ENCODE measurements at regions of chr4 and their contacts with region 1.

Region 1: DNA sequence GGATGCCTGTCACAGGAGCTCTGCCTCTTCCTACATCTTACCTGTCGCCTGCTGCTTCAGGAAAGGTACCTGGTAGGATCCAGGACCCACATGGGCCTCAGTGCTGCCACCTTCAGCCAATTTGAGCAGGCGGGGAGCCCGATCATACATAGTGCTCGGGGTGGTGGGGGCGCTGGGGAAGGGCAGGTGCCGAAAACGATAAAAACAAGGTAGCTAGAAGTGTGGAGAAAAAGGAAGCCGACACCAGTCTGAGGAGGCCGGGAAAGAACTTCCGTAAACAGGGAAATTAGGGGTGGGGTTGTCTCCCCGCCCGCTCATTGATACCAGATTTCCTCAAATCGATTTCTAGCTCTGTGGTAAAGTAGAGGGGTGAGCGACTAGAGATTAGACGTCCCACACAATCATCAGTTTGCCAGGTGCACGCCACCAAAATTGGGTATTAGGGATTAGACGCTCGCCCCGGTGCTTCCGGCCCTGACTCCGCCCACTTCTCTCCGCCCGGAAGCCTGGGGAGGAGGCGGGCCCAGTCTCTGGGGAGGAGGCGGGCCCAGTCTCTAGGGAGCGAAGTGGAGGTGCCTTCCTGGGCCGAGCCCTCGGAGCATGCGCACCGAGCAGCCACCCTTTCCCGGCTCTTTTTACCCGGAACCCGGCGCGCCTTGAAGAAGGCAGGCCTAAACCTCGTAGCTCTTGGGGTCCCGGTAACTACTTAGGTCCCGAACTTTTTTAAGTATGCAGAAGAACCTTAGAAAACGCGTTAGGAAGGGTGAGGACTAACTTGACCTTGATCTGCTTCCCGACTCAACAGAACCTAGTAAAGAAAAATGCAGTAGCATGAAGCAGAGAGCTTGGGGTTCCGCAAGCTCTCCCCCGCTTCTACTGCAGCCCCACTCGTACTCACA is at the start of gene STPG2:
- DNase-seq: peak; percentile 84 to 91 (median 90)
- H3K4me3 ChIP-seq: peak within 1 kb of the TSS; percentile 94 to 99 (median 96)
- H3K4me3 Mint-ChIP-seq: peak within 1 kb of the TSS; percentile 94 to 96
- H3K27ac ChIP-seq: peak within 1 kb of the TSS; percentile 71 to 95
- H3K27ac Mint-ChIP-seq: peak within 1 kb of the TSS; percentile 91 to 97 (median 95)
- H3K4me1 ChIP-seq: peaks cover 10 to 13% of the 10 kb centered on the region in 2 donors
- H3K4me1 Mint-ChIP-seq: peaks cover 12% of the 10 kb centered on the region
- H3K27me3 ChIP-seq: peaks cover 0 to 2% of the 10 kb centered on the region in 2 donors
- H3K27me3 Mint-ChIP-seq: peaks cover 0 to 3% (median 2%) of the 10 kb centered on the region in 3 donors
- CTCF ChIP-seq: peak; percentile 65
- polyA plus RNA-seq, gene STPG2: 0.04 TPM in 1 of 3 donors, not detected in the others

Region 2: DNA sequence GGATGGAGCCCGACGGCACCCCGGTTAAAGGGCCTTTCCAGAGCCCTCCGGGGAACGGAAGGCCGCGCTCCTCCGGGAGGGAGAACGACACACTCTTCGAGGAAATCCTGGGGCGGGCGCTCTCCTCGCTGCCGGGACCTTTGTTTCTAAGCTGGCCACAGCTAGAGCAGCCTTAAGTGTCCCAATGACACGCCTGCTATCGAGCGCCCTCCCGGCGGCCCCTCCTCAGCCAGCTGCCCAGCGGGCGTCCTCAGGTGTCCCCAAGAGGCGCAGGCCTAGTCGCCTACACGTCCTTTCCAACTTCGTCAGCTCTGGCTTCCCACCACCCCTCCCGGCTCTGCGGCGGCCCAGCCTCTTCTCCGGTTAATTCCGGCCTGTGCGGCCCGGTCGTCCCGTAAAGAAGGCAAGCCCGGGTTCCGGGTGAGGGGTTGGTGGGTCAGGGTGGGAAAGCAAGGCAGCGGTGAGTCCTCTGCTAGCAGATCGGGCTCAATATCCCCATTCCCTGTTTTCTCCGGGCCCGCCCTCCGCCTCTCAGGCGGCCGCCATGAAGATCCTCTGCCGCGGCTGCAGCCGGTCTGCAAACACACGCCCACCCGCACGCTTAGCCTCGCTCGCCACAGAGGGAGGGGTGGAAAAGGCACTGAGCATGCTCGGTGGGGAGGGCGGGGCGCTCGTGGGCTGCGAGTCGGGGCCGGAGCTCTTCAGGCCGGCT is 117.5 kb after region 1 on chr4:
- intact Hi-C with region 1: loop called in 1 of 2 experiments (anchors 10 kb)
- DNase-seq: peak; percentile 76 to 89 (median 84)
- H3K4me3 ChIP-seq: peak overlapping the region; percentile 79 to 93 (median 84)
- H3K4me3 Mint-ChIP-seq: peak overlapping the region; percentile 89 to 93
- H3K27ac ChIP-seq: peak overlapping the region; percentile 81 to 91
- H3K27ac Mint-ChIP-seq: peak overlapping the region; percentile 85 to 93 (median 89)
- H3K4me1 ChIP-seq: peaks cover 22 to 24% of the 10 kb centered on the region in 2 donors
- H3K4me1 Mint-ChIP-seq: peaks cover 23% of the 10 kb centered on the region
- H3K27me3 ChIP-seq: no peaks in the 10 kb centered on the region
- H3K27me3 Mint-ChIP-seq: no peaks in the 10 kb centered on the region
- CTCF ChIP-seq: no peak

Region 3: DNA sequence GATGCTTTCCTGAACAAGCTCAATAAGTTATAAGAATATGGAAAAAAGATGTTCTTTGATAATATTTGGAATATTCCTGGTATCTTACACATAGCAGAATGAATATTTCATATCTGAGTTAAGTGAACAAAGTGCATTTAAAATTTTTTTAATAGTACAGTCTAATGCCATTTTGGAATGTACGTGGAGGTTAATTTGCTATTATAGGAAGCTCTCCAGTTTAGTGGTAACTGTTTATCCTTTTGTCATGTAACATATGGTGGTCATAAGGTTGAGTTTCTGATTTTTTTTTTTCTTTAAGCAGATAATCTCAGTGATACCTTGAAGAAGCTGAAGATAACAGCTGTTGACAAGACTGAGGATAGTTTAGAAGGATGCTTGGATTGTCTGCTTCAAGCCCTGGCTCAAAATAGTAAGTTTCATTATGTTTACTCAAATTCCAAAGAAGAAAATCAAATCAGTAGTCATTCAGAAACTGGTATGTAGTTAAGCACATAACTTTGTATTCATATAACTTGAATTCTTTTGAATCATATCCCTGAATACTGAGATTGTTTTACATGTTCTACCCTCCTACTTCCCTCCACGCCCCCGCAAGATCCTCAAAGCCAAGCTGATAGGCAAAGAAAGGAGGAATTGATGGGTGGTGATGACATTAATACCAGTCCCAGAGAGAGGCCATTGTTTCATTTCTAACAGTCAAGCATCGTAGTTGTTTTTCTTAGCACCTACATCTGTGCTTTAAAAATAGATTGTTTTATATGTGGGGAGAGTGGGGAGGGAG is 150.0 kb after region 1 on chr4:
- intact Hi-C with region 1: no loop called
- DNase-seq: no peak
- H3K4me3 ChIP-seq: no peak overlapping the region
- H3K4me3 Mint-ChIP-seq: no peak overlapping the region
- H3K27ac ChIP-seq: no peak overlapping the region
- H3K27ac Mint-ChIP-seq: peak overlapping the region in 1 of 7 donors; percentile 55
- H3K4me1 ChIP-seq: no peaks in the 10 kb centered on the region
- H3K4me1 Mint-ChIP-seq: peaks cover 6% of the 10 kb centered on the region
- H3K27me3 ChIP-seq: no peaks in the 10 kb centered on the region
- H3K27me3 Mint-ChIP-seq: peaks cover 0 to 2% (median 0%) of the 10 kb centered on the region in 3 donors
- CTCF ChIP-seq: no peak